ENCODE measurements at regions of chr7 and their contacts with region 1.

Region 1: DNA sequence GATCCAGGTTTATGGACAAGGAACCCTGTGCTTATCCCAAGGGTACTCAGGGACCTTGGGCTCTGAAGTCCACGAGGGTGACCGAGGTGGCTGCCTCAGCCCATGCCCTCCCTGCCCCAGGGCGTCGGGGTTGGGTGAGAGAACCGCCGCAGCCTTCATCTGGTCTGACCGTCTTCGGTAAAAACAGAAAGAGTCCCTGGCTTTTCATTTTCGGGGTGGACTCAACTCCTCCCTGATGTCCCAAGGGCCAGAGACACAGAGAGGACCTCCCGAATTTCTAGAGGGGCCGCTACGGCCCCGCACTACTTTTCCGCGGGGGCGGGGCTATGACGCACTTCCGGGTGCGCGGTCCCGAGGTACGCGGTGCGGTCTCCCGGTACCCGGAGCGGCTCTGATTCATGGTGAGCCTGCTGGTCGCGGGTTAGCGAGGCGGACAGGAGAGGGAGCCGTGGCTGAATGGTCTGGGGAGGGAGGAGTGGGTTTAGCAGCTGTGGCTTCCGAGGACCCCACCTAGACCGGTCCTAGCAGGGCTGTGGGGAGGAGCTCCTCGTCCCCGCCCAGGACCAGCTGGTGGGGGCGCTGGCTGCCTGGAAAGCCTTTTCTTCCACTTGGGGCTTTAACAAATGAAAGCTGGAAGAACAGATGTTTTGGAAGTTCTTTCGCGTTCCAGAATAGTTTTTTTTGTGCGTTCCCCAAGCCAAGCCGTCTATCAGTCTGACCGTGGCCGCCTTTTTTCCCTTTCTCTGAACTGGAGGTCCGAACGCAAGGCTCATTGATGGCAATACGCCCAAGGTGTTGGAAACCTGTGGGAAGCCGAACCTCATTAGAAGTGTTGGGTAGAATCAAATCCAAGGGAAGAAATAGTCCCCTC is at the start of gene ZSCAN21:
- DNase-seq: peak; percentile 93
- ATAC-seq: peak; percentile 98
- total RNA-seq, gene ZSCAN21: 9.4 TPM

Region 2: GRCh38 chr7:99997545-99998137 is 52.0 kb before region 1 on chr7:
- intact Hi-C with region 1: loop called (anchors 5 kb)
- DNase-seq: peak; percentile 82
- ATAC-seq: peak; percentile 74

Region 3: DNA sequence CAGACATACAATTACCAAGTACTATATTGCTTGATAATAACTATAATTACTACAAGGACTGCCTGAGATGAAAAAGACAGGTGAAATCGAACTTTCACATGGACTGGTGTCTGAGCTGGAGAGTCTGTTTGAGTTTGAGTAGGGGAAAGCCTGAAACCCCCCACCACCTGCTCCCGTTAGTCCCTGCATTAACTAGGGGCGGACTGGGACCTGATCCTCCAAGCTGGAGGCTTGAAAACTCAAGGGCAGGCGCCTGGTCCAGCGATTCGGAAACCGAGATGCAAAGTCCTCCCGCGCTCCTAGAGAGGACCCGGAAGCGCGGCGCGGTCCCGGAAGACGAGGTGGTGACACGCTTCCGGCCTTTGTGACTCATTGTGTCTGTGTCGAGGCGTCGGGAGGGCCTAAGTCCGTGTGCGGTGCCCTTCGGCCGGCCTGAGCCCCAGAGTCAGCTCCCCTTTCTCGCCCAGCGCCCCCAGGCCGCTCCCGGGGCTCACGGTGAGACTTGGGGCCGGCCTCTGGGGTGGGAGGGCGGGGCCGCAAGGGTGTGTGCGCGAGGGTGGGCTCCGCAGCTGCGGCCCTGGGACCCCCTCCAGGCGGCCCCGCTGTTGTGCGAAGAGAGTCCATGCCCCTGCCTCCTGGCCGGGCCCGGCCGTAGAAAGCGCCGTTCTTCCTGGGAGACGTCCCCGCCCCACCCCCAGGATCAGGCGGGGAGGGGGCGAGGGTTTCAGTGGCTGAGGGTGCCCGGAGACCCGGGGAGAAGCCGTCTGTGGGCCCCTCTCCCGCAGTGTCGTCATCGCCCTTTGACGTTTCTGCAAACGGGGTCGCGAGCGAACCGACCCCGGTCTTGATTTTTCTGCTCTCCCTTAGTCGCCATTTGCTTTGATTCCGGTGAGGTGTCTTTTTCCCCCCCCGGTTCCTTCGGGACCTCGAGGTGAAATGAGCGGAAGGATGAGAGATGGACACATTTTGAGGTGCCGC is 34.2 kb before region 1 on chr7 and contains the start of gene ZKSCAN1:
- intact Hi-C with region 1: loop called (anchors 2 kb)
- DNase-seq: peak; percentile 96
- ATAC-seq: peak; percentile 99
- total RNA-seq, gene ZKSCAN1: 36.1 TPM

Region 4: DNA sequence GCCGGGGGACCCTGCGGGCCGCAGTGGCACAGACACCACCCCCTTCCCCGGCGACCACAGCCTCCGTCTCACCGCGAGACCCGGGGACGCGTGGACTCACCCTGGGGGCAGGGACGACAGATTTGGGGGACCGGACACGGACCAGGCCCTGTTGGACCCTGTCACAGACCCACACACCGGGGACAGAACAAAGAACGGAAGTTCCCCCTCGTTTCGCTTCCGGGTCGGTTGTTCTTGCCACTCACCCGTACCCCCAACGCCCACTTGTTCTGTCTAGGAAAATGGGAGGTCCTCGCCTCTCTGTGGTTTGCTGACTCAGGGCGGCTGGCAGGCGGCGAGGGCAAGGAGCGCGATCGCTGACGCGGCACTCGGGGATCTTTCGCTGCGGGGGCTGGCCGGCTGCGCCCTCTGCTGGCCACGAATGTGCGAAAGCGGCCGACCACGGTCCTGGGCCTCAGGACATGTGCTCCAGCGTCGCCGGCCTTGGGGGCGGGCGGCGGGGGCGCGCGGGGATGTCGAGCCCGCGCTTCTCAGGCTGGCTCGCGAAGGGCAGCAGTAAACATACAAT is 31.9 kb after region 1 on chr7 and contains the start of gene ZNF3:
- intact Hi-C with region 1: loop called (anchors 2 kb)
- DNase-seq: peak; percentile 98
- ATAC-seq: peak; percentile 97
- total RNA-seq, gene ZNF3: 14.6 TPM

Region 5: DNA sequence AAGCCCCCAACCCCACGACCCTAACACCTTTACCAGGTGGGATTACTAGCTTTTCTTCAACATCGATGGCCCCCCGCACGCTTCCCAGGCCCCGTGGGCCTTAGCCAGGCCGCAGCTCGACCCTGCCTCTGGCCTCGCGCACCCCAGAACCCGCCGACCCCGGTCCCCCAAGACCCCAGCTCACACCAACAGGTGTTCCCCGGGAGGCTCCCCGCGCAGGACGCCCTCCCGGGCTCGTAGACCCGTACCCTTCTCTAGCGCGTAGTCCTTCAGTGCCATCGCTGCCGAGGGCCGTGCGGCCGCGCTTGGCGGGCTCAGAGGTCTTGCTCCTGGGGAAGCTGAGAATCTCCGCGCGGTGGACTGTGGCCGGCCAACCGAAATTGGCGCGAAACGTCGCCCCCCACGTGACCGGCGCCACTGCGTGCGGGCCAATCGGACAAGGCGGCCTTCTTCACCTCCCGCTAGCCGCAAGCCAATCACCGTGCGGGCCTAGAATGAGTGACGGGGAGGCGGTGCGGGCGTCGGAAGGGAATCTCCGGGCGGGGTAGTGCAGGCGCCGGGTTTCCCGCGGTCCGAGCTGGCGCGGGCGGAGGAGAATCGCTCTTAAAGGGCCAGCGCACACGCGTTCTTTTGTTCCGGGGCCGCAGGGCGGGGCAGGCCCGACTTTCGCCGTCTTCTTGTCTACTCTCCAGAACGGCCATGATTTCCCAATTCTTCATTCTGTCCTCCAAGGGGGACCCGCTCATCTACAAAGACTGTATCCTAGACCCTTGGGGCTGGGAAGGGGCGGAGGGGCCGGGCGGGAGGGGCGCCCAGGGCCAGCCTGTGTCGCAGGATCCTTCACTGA is 51.6 kb after region 1 on chr7 and contains the starts of genes AP4M1 and MCM7:
- intact Hi-C with region 1: loop called (anchors 1 kb)
- DNase-seq: peak; percentile 100
- ATAC-seq: peak; percentile 97
- total RNA-seq, gene AP4M1: 10.1 TPM
- total RNA-seq, gene MCM7: 25.4 TPM

Region 6: DNA sequence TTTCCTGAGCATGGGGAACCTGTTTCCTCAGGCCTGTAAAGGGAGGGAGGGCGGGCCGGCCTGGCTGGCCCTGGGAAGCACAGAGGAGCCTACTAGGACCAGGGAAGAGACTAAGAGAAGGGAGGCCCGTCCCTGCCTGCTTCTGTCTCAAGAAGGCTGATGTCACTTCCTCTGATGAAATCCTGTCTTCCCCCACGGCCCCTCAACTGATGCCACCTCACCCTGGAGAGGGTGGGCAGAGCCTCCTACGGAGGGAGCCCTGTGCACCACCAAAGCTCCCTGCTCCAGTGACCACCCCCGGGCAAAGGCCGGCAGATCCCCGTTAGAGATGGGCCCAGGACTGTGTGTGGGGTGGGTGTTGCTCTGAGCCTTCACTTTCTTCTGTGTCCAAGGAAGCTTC is 322.6 kb after region 1 on chr7:
- intact Hi-C with region 1: no loop called
- DNase-seq: peak; percentile 73
- ATAC-seq: peak; percentile 14